Activated CD4-positive, alpha-beta memory T cell treated with anti-CD3 and anti-CD28 coated beads, Interleukin-2, amount 10 ng/mL, durations not matched to agents 7 days and 5 days (primary cell): ENCODE measurements at regions of chr14 and their contacts with region 1.

Region 1: DNA sequence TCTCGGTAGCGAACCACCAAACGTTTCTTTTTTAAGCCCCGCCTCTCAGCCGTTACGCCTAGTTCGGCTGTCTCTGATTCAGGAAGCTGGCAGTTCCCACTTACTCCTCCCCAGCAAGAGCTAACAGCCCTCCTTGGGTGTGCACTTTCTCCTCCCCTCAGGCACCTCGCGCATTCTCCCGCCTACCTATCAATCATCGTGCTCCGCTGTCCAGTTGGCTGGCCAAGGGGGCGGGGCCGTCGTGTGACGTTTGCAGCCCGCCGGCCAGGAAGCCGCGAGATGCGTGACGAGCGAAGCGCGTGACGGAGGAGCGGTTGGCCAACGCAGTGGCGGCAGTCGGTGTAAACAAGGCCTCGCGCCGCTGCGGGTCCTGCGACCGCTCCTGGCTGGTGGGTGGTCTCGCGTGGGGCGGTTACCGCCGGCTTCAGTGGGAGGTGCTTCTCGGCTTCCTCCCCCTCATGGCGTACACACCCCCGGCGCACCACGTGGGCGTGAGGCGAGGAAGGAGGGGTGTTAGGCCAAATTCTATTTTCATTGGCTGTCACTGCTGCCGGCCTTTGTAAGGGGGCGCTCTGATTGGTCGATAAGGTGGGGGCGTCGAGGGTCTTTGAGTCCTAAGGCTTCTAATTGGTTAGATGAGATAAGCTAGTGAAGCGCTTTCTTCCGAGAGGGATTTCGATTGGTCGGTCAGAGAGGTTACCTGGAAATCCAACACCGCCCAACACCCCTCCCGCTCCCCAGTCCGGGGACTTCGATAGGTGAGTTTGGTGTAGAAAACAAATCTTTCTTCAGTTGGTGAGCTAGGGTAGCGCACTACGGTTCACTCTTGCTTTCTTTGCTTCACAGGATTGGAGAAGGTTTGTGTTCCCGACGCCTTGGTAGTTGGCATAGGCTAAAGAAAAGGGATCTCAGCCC is at the starts of genes DCAF11 and NRL:
- DNase-seq: peak; percentile 98
- H3K4me3 Mint-ChIP-seq: peak within 1 kb of the TSS; percentile 98
- H3K27ac Mint-ChIP-seq: peak within 1 kb of the TSS; percentile 100
- H3K4me1 Mint-ChIP-seq: peaks cover 42% of the 10 kb centered on the region
- H3K27me3 Mint-ChIP-seq: no peaks in the 10 kb centered on the region
- total RNA-seq, gene DCAF11: 94.1 to 98.2 TPM
- total RNA-seq, gene NRL: 2.1 to 2.4 TPM

Region 2: DNA sequence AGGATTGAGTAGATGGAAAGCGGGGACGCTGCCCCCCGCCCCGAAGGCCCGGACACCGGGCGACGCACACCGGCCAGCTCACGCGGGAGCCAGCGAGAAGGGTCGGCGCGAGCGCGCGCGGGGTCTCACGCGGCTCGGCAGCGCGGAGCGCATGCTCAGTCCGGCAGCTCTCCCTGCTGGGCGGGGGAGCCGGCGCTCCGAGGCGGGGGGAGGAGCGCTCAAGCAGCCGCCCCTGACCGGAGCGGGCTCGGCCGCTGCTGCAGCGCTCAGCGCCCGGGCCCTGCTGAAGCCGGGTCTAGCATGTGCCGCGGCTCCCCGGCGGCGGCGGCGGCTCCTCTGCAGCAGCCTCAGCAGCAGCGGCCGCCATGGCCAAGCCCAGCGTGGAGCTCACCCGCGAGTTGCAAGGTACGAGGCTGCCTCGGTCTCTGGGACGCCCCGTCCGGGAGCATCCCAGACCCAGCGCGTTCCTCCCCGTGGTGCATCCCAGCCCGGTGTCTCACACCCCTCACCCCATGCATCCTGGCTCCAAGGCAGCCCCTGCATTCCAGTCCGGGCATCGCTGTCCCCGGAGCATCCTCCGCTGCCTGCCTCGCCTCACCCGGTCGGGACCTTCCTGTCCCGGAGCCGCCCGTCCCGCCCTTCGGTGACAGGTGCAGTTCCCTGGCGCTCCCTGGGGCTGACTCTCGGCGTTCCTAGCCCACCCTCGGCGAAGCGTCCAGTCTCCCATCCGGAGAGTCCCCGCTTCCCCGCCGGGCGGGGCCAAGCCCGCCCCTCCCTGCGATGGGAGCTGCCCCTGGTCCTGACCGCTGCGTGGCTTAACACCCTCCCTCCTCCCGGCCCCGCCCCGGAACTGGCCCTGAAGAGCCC is 62.8 kb before region 1 on chr14 and contains the start of gene CARMIL3:
- CTCF ChIA-PET with region 1: interaction called, 164 read pairs
- POLR2A ChIA-PET with region 1: interaction called, 34 read pairs
- DNase-seq: peak; percentile 72
- H3K4me3 Mint-ChIP-seq: peak within 1 kb of the TSS; percentile 69
- H3K27ac Mint-ChIP-seq: no peak within 1 kb of the TSS
- H3K4me1 Mint-ChIP-seq: peaks cover 23% of the 10 kb centered on the region
- H3K27me3 Mint-ChIP-seq: peaks cover 26% of the 10 kb centered on the region
- total RNA-seq, gene CARMIL3: 3.7 to 4.2 TPM

Region 3: GRCh38 chr14:24093901-24094761 is 20.7 kb before region 1 on chr14 and contains the start of gene PCK2:
- CTCF ChIA-PET with region 1: interaction called, 254 read pairs
- POLR2A ChIA-PET with region 1: interaction called, 149 read pairs
- DNase-seq: peak; percentile 87
- H3K4me3 Mint-ChIP-seq: peak within 1 kb of the TSS; percentile 100
- H3K27ac Mint-ChIP-seq: peak within 1 kb of the TSS; percentile 96
- H3K4me1 Mint-ChIP-seq: peaks cover 38% of the 10 kb centered on the region
- H3K27me3 Mint-ChIP-seq: no peaks in the 10 kb centered on the region
- total RNA-seq, gene PCK2: 88.5 to 90.6 TPM

Region 4: GRCh38 chr14:24146978-24147760 is 32.4 kb after region 1 on chr14 and contains the start of gene RNF31:
- CTCF ChIA-PET with region 1: interaction called, 12 read pairs
- POLR2A ChIA-PET with region 1: interaction called, 448 read pairs
- DNase-seq: peak; percentile 99
- H3K4me3 Mint-ChIP-seq: peak within 1 kb of the TSS; percentile 96
- H3K27ac Mint-ChIP-seq: peak within 1 kb of the TSS; percentile 99
- H3K4me1 Mint-ChIP-seq: peaks cover 58% of the 10 kb centered on the region
- H3K27me3 Mint-ChIP-seq: no peaks in the 10 kb centered on the region
- total RNA-seq, gene RNF31: 122 to 129 TPM

Region 5: DNA sequence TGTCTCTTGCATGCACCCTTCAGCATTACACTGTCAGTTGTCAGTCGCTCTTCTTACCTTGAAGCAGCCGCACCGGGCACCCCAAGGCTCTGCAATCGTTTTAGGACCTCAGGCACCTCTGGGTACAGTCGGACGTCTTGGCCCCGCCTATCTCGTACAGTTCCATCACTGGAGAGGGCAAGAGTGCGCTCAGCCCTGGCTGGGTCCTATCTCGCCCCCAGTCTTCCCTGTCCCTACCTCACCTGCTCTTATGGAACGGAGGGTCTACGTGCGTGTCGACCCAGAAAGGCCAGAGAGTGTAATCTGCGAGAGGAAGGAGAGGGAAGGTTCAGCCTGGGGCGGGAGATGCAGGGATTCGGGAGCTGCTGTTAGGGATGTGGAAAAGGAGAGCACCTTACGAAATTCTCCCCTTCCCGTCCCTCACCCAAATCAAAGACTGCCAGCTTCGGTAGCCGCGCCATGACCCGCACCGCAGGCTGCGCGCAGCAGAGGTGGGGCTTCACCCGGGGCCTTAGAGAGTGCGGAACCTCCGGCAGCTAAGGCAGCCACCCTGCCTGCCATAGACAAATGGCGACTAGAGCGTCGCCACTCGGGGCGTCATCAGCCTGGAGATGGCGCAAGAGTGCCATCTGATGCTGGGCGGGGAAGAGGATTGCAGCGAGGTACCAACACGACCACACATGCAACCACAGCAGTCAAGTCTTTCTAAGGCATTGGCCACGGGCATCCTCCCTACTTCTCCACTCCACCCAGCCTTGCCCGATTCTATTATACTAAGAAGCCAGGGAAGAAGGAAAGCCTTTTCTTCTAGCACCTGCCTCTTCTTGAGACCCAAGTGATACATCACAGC is 100.9 kb after region 1 on chr14 and contains the start of gene MDP1:
- CTCF ChIA-PET with region 1: interaction called, 5 read pairs
- POLR2A ChIA-PET with region 1: interaction called, 41 read pairs
- DNase-seq: peak; percentile 92
- H3K4me3 Mint-ChIP-seq: peak within 1 kb of the TSS; percentile 88
- H3K27ac Mint-ChIP-seq: peak within 1 kb of the TSS; percentile 95
- H3K4me1 Mint-ChIP-seq: peaks cover 64% of the 10 kb centered on the region
- H3K27me3 Mint-ChIP-seq: no peaks in the 10 kb centered on the region
- total RNA-seq, gene MDP1: 13.5 to 17.0 TPM

Region 6: GRCh38 chr14:24277606-24278321 is 163.0 kb after region 1 on chr14:
- CTCF ChIA-PET with region 1: no interaction called
- POLR2A ChIA-PET with region 1: no interaction called
- DNase-seq: no peak
- H3K4me3 Mint-ChIP-seq: no peak overlapping the region
- H3K27ac Mint-ChIP-seq: no peak overlapping the region
- H3K4me1 Mint-ChIP-seq: peaks cover 40% of the 10 kb centered on the region
- H3K27me3 Mint-ChIP-seq: peaks cover 5% of the 10 kb centered on the region

Region 7: GRCh38 chr14:24431569-24432258 is 316.9 kb after region 1 on chr14:
- CTCF ChIA-PET with region 1: interaction called, 10 read pairs
- POLR2A ChIA-PET with region 1: interaction called, 20 read pairs
- DNase-seq: peak; percentile 92
- H3K4me3 Mint-ChIP-seq: peak overlapping the region; percentile 92
- H3K27ac Mint-ChIP-seq: peak overlapping the region; percentile 92
- H3K4me1 Mint-ChIP-seq: peaks cover 60% of the 10 kb centered on the region
- H3K27me3 Mint-ChIP-seq: no peaks in the 10 kb centered on the region